AG04450 (cell line): ENCODE measurements at regions of chr7 and their contacts with region 1.

Region 1: DNA sequence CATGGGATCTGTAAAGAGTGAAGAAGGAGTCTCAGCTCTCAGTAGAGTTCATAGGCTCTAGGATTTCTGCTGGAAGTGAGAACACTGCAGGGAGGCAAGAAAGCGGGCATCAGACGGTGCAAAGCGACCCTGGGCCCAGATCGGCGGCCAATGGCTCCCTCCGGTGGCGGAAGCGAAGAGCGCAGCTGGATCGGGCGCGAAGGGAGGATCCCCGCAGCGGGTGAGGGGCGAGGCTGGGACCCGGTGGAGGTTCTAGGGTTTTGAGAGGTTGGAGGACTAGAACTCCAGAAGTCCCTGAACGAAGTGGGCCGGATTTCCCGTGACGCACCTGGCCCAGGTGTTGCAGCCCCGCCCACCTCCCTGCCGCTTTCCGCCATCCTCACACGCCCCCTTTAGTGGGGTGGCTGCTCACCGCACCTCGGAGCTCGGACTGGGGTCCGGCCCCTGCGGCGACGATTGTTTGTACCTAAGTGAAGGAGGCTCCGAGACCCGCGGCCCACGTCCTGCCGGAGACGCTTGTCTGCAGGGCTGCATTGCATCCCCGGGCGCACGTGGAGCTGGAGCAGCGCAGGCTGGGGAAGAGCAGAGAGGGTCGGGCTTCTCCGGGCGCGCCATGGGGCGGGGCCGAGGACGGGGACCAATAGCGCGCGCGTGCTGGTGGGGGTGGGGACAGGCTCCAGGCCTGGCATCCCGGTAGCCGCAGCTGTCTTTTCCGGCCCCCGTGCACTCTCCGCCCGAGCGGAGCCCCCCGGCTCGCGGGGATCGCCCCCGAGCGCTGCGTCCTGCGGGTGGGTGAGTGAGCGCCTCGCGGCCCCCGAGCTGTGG is at the start of gene SLC12A9:
- DNase-seq: peak; percentile 73
- H3K4me3 ChIP-seq: peak within 1 kb of the TSS; percentile 83
- H3K27ac ChIP-seq: no peak within 1 kb of the TSS
- H3K27me3 ChIP-seq: no peaks in the 10 kb centered on the region
- CTCF ChIP-seq: peak; percentile 89
- polyA plus RNA-seq, gene SLC12A9: 10.8 and 11.2 TPM in 2 replicates

Region 2: GRCh38 chr7:100691676-100692577 is 160.3 kb before region 1 on chr7:
- CTCF ChIA-PET with region 1: interaction called, 56 read pairs
- POLR2A ChIA-PET with region 1: interaction called, 5 read pairs
- DNase-seq: no peak
- H3K4me3 ChIP-seq: peak overlapping the region; percentile 80
- H3K27ac ChIP-seq: no peak overlapping the region
- H3K27me3 ChIP-seq: peaks cover 2% of the 10 kb centered on the region
- CTCF ChIP-seq: peak; percentile 90

Region 3: DNA sequence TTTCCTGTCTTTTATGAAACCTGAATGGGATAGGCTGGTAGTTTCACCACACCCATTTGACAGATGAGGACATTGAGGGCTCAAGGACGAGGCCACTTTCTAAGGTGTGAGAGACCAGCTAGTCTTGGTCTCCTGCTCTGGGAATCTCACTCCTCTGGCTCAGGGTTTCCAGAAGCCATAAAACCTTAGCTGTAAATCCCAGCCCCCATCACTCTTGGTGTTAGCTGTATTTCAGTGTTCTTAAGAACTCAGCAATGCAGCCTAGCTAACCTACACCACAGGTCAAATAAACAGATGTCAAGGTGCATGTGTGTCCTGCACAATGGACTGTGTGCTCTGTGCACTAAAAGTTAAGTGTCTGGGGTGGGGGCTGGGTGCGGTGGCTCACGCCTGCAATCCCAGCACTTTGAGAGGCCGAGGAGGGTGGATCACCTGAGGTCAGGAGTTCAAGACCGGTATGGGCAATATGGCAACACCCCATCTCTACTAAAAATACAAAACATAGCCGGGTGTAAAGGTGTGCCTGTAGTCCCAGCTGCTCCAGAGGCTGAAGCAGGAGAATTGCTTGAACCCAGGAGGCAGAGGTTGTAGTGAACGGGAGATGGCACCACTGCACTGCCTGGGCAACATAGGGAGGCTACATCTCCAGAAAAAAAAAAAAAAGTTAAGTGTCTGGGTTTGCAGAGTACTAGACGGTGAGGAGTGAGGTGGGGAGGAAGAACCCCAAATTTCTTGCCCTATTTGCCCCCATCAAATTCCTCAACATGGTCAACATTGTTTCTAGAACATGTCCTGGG is 132.5 kb before region 1 on chr7:
- CTCF ChIA-PET with region 1: interaction called, 37 read pairs
- POLR2A ChIA-PET with region 1: interaction called, 7 read pairs
- DNase-seq: peak; percentile 11
- H3K4me3 ChIP-seq: no peak overlapping the region
- H3K27ac ChIP-seq: no peak overlapping the region
- H3K27me3 ChIP-seq: peaks cover 59% of the 10 kb centered on the region
- CTCF ChIP-seq: peak; percentile 49

Region 4: DNA sequence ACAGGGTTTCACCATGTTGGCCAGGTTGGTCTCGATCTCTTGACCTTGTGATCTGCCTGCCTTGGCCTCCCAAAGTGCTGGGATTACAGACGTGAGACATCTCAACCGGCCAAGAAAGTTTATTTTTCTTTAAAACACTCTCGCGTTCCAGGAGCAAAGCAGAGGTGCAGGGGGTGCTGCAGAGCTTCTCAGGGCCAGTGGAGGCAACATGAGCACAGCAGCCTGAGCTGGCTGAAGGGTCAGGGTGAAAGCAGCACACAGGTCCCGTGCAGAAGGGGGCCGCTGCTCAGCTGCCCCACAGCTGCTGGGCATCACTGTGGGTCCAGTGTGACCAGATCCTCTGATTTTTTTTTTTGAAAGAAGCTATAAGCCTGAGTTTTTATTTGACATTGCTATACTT is 71.0 kb before region 1 on chr7:
- CTCF ChIA-PET with region 1: no interaction called
- POLR2A ChIA-PET with region 1: no interaction called
- DNase-seq: no peak
- H3K4me3 ChIP-seq: no peak overlapping the region
- H3K27ac ChIP-seq: no peak overlapping the region
- H3K27me3 ChIP-seq: peaks cover 17% of the 10 kb centered on the region
- CTCF ChIP-seq: peak; percentile 17; the same call in 1 of the 2 replicates

Region 5: GRCh38 chr7:100803398-100804233 is 48.6 kb before region 1 on chr7:
- CTCF ChIA-PET with region 1: interaction called, 22 read pairs
- POLR2A ChIA-PET with region 1: interaction called, 9 read pairs
- DNase-seq: peak; percentile 63
- H3K4me3 ChIP-seq: no peak overlapping the region
- H3K27ac ChIP-seq: peak overlapping the region; percentile 73
- H3K27me3 ChIP-seq: no peaks in the 10 kb centered on the region
- CTCF ChIP-seq: no peak

Region 6: DNA sequence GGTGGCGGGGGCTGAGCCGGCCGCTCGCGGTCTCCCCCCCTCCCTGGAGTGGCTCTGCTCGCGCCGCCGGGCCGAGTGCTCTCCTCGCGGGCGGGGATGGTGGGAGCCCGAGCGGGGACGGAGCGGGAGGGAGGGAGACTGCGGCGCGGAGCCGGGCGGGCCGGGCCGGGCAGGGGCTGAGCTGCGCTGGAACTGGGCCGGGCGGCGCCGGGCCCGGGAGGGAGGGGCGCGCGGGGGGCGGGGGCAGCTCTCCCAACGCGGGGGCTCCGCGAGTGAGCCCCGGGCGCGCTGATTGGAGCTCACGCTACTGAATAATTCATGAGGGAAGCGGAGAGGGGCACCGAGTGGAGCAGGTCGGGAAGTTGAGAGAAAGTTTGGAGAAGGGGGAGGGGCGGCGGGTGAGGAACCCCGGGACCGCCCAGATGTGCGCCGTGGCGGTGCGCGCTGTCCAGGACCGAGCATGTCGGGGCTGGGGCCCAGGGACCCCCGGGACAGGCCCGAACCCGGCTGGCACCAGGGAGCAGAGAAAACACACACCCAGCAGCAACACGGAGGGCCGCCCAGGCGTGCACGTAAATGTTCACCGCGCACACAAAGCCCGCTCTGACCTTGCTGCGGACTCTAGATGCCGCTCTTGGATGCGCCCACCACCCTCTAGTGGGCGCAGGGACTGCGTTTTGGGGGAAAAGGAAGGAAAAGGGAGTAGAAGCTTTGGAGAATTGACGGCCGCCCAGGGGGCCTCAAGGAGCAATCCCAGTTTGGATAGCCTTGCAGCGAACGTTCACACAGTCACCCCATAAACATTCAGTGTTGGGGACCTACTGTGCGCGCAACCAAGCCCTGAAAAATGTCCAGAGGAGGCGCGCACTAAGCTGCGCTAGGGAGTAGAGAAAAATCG is 24.7 kb before region 1 on chr7 and contains the start of gene EPHB4:
- CTCF ChIA-PET with region 1: interaction called, 12 read pairs
- POLR2A ChIA-PET with region 1: interaction called, 12 read pairs
- DNase-seq: peak; percentile 72
- H3K4me3 ChIP-seq: peak within 1 kb of the TSS; percentile 78
- H3K27ac ChIP-seq: peak within 1 kb of the TSS; percentile 73
- H3K27me3 ChIP-seq: no peaks in the 10 kb centered on the region
- CTCF ChIP-seq: peak; percentile 73
- polyA plus RNA-seq, gene EPHB4: 43.8 and 46.5 TPM in 2 replicates

Region 7: DNA sequence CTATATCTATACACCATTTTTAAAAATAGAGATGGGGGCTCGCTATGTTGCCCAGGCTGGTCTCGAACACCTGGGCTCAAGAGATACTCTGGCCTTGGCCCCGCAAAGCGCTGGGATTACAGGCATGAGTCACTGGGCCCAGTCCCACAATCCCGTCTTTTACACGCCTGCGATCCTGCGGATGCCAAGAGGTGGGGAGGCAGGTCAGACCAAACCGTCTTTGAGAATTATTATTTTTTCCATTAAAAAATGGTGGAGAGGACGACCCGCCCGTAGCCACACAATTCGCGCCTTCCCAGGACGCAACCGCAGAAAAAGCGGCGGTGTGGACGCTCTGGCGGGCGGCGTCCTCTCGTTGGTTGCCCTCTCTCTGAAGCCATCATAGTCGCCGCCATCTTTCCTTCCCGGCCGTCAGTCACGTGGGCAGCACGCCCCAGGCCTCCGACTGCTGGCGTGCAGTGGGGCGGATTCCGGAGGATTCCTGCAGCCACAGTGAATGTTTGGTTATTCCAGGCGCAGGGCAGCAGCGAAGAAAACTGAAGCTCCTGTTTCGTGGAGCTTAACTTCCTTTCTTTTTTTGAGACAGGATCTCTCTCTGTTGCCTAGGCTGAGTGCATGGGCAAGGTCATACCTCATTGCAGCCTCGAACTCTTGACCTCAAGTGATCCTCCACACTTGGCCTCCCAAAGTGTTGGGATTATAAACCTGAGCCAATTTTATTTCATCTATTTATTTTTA is 15.0 kb before region 1 on chr7:
- CTCF ChIA-PET with region 1: interaction called, 10 read pairs
- POLR2A ChIA-PET with region 1: interaction called, 9 read pairs
- DNase-seq: peak; percentile 77
- H3K4me3 ChIP-seq: peak overlapping the region; percentile 52
- H3K27ac ChIP-seq: peak overlapping the region; percentile 61
- H3K27me3 ChIP-seq: no peaks in the 10 kb centered on the region
- CTCF ChIP-seq: no peak

Region 8: DNA sequence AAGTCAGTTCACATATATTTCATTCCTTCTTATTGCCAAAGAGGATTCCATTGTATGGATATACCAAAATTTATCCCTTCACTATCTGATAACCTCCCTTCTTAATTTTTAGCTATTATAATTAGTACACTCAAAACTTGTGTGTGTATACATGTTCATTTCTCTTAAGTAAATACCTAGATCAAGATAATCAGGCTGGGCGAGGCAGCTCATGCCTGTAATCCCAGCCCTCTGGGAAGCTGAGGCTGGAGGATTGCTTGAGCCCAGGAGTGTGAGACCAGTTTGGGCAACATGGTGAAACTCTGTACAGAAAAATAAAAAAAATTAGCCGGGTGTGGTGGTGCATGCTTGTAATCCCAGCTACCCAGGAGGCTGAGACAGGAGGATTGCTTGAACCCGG is 59.2 kb after region 1 on chr7:
- CTCF ChIA-PET with region 1: no interaction called
- POLR2A ChIA-PET with region 1: no interaction called
- DNase-seq: no peak
- H3K4me3 ChIP-seq: no peak overlapping the region
- H3K27ac ChIP-seq: no peak overlapping the region
- H3K27me3 ChIP-seq: no peaks in the 10 kb centered on the region
- CTCF ChIP-seq: no peak